ENCODE measurements at regions of chr6 and their contacts with region 1.

Region 1: DNA sequence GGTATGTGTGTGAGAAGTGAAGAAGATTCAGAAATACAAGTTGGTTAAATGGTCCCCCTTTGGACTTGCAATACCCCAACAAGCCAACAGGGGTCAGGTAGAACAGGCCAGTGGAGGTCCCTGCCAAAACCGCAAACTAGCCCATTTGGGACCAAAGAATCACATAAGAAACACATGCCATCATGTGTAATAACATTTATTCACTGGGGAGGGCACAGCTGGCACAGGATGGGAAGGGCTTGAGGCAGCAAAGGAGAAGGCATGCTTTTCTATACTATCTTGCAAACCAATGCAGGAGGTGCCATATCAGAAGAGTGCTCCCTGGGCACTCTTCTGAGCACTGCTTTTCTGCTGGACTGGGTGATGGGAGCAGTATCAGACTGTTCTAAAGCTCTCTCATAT is 116.1 kb upstream of the TRAF3IP2 start:
- DNase-seq: peak; percentile 70
- ATAC-seq: peak; percentile 27
- H3K4me3 Mint-ChIP-seq: no peak overlapping the region
- H3K27ac Mint-ChIP-seq: peak overlapping the region; percentile 68
- H3K4me1 Mint-ChIP-seq: peaks cover 54% of the 10 kb centered on the region
- H3K27me3 Mint-ChIP-seq: no peaks in the 10 kb centered on the region

Region 2: GRCh38 chr6:111631903-111632460 is 89.8 kb before region 1 on chr6:
- CTCF ChIA-PET with region 1: no interaction called
- POLR2A ChIA-PET with region 1: no interaction called
- DNase-seq: no peak
- ATAC-seq: no peak
- H3K4me3 Mint-ChIP-seq: no peak overlapping the region
- H3K27ac Mint-ChIP-seq: no peak overlapping the region
- H3K4me1 Mint-ChIP-seq: no peaks in the 10 kb centered on the region
- H3K27me3 Mint-ChIP-seq: peaks cover 2% of the 10 kb centered on the region

Region 3: DNA sequence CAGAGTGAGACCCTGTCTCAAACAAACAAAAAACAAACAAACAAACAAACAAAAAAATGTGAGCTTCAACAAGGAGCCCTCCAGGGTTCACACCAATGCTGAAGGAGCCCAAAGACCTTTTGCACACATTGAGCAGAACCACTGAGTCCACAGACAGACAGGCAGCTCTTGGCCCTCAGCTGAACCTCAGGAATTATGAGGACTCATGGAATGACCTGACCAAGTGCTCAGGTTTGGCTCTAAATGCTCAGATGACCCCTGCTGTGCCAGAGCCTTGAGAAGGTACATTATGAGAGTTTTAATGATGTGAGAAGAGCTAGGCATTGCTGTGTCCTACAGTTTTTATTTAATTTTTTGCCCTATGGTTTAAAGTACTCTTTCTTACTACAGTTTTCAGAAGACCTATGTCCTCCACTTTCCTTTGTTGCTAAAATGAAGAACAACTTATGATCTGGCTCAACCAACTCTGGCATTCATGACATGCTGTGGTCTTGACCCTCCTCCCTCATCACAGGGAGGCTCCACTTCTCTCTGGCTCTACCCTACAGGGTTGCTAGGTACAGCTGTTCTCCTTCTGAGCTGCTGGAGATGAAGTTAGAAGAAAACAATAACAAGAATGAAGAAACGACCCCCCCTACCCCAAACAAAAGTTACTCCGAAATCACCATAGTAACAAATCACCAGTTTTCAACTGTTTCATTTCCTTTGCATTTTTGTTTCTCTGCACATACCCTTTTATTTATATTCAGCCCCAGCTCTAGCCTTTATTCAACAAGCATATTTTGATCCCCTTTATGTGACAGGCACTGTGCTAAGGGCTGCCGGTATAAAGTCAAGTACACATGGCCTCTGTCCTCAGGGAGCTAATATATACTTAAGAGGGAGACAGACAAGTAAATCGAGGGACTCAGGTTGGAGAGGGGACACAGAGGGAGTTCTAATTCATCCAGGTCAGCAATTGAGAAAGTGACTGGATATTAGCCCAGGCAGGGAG is 12.6 kb after region 1 on chr6:
- CTCF ChIA-PET with region 1: interaction called, 19 read pairs
- POLR2A ChIA-PET with region 1: interaction called, 3 read pairs
- DNase-seq: no peak
- ATAC-seq: no peak
- H3K4me3 Mint-ChIP-seq: no peak overlapping the region
- H3K27ac Mint-ChIP-seq: peak overlapping the region; percentile 13
- H3K4me1 Mint-ChIP-seq: peaks cover 76% of the 10 kb centered on the region
- H3K27me3 Mint-ChIP-seq: no peaks in the 10 kb centered on the region

Region 4: GRCh38 chr6:111750753-111751684 is 29.3 kb after region 1 on chr6:
- CTCF ChIA-PET with region 1: interaction called, 12 read pairs
- POLR2A ChIA-PET with region 1: no interaction called
- DNase-seq: peak; percentile 84
- ATAC-seq: peak; percentile 92
- H3K4me3 Mint-ChIP-seq: peak overlapping the region; percentile 63
- H3K27ac Mint-ChIP-seq: peak overlapping the region; percentile 93
- H3K4me1 Mint-ChIP-seq: peaks cover 92% of the 10 kb centered on the region
- H3K27me3 Mint-ChIP-seq: no peaks in the 10 kb centered on the region

Measured in activated CD8-positive, alpha-beta T cell treated with anti-CD3 and anti-CD28 coated beads, Interleukin-2, amount 10 ng/mL, durations not matched to agents 7 days and 5 days (primary cell).